CD4-positive, alpha-beta memory T cell (primary cell): ENCODE measurements at regions of chr1 and their contacts with region 1.

Region 1: DNA sequence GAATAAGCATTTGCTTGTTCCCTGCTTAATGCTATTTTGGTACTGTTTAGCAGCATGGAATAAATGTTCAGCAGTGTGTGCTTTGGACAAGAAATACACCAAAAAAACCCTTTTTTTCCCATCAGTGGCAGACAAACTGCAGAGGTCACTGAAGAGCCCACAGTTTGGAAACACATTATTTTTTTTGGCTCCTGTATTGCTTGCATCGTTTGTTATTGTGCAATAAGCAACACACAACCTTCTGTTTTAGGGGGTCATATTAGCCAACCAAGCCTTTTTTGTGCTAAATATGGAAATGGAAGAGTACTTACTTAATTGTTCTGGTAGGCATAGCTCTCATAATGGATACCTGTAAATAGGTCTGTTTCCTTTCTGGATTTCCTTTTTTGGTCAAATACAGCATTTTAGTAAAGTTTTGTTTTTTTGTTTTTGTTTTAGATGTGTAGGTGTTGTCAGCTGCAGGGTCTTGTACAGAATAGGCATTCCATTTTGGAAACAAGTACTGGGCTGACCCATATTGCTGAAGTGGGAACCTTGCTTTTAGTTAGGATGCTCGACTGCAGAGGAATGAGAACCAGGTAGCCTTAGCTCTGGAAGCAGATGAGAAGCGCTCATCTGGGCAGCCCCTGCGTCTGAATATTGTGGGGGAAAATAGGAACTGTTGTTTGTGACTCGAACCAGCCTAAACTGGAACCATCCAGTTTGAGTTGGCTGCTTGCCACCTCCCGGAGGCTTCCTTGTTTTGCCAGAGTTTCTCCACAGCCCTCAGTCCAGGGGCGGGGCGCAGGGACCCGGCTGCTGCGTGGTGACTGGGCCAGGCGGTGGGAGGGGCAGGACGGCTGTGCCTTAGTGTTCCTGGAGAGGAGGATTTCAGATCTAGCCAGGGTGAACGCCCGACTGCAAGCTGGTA is 38.4 kb downstream of the SPEN start:
- DNase-seq: no peak
- H3K4me3 ChIP-seq: no peak overlapping the region
- H3K4me3 Mint-ChIP-seq: peak overlapping the region in 6 of 8 donors; percentile 17 to 74 (median 46)
- H3K27ac ChIP-seq: no peak overlapping the region
- H3K27ac Mint-ChIP-seq: peak overlapping the region in 6 of 7 donors; percentile 17 to 75 (median 48)
- H3K4me1 ChIP-seq: peaks cover 37% of the 10 kb centered on the region
- H3K4me1 Mint-ChIP-seq: peaks cover 35 to 66% (median 44%) of the 10 kb centered on the region in 4 donors
- H3K27me3 ChIP-seq: no peaks in the 10 kb centered on the region
- H3K27me3 Mint-ChIP-seq: no peaks in the 10 kb centered on the region

Region 2: DNA sequence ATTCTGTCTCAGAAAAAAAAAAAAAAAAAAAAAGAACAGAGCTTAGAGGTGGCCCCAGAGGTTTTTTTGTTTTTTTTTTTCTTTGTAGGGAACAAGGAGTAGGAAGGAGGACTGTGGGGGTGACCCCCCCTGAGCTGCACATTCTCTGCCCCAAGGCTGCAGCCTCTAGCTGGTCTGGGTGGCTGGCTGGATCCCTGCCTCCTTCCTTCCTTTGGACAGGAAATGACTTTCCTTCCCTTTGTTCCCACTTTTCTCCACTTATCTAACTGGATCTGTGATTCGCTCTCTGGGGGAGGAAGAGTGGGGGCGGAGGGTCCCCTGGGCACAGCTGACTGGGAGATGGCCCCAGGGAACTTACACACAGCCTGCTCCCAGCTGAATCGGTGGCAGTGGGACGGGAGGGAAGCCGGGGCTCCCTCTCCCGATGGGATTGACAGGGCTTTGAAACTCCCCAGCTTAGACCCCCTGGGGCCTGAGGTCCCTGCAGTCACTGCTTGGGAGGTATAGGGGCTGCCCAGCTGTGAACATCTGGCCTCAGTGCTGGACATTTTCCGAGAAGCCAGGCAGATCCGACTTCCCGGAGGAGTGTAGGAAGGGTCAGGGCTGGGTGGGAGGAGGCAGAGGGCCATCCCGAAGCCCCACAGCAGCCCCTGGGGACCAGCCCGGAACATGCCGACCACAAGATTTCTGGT is 125.3 kb before region 1 on chr1:
- CTCF ChIA-PET with region 1: no interaction called
- POLR2A ChIA-PET with region 1: no interaction called
- intact Hi-C with region 1: no loop called
- DNase-seq: no peak
- H3K4me3 ChIP-seq: no peak overlapping the region
- H3K4me3 Mint-ChIP-seq: peak overlapping the region in 1 of 8 donors; percentile 5
- H3K27ac ChIP-seq: no peak overlapping the region
- H3K27ac Mint-ChIP-seq: no peak overlapping the region
- H3K4me1 ChIP-seq: peaks cover 21% of the 10 kb centered on the region
- H3K4me1 Mint-ChIP-seq: peaks cover 6 to 23% (median 14%) of the 10 kb centered on the region in 4 donors
- H3K27me3 ChIP-seq: peaks cover 4% of the 10 kb centered on the region
- H3K27me3 Mint-ChIP-seq: peaks cover 16 to 36% of the 10 kb centered on the region in 2 donors

Region 3: DNA sequence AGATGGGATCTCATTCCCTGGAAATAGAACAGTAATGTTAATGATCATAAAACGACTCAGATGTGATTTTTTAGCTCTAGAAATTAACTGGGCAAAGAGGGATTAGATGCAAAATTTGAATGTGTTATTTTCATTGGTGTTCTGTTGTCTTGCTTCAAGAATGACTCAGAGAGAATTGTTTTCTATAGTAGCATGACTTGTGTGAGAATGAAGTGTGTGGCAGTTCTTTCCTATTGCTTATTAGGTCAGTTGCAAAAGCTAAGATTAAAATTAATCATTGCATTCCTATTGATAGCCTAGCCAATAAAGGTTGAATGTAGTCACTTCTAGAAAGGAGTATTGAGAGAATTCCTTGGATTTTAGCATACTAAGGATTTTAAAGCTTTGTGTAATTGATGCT is 15.5 kb before region 1 on chr1:
- CTCF ChIA-PET with region 1: interaction called, 3 read pairs
- POLR2A ChIA-PET with region 1: no interaction called
- intact Hi-C with region 1: loop called (anchors 2 kb)
- DNase-seq: no peak
- H3K4me3 ChIP-seq: no peak overlapping the region
- H3K4me3 Mint-ChIP-seq: peak overlapping the region in 2 of 8 donors; percentile 17 to 21
- H3K27ac ChIP-seq: no peak overlapping the region
- H3K27ac Mint-ChIP-seq: peak overlapping the region in 5 of 7 donors; percentile 3 to 62 (median 32)
- H3K4me1 ChIP-seq: peaks cover 27% of the 10 kb centered on the region
- H3K4me1 Mint-ChIP-seq: peaks cover 37 to 72% (median 59%) of the 10 kb centered on the region in 4 donors
- H3K27me3 ChIP-seq: no peaks in the 10 kb centered on the region
- H3K27me3 Mint-ChIP-seq: no peaks in the 10 kb centered on the region